Activated B cell treated with CpG ODN at 0.5 μM for 24 hours (primary cell): ENCODE measurements at regions of chrX and their contacts with region 1.

Region 1: DNA sequence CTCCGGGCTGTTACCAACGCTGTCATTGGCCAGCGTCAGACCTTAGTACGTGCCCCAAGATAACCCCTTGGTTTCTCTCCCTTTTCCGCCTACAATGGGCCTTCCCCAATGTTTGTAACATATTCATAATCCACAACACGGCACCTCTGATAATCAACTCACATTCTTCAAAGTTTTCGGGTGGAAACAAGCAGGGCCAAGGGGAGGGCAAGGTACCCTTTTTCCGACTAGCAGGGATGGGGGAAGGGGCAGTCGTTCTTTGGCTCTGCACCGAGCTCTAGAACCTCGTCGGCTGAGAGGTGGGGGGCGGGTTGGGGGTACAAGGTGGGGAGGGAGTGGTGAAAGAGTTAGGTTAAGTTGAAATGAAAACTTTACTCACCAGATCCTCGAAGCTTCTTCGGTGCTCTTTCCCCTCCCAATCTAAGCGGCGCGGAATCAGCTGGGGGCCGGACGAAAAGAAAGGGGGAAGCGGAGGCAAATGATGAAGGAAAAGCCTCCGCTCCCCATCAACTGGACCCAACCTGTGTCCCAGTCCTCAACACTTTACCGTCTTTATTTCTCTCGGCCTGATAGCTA is 1.4 kb downstream of the BRWD3 start:
- DNase-seq: peak; percentile 65
- ATAC-seq: peak; percentile 59
- H3K4me3 Mint-ChIP-seq: peak overlapping the region; percentile 92
- H3K27ac Mint-ChIP-seq: peak overlapping the region; percentile 90
- H3K4me1 Mint-ChIP-seq: peaks cover 32% of the 10 kb centered on the region
- H3K27me3 Mint-ChIP-seq: no peaks in the 10 kb centered on the region
- CTCF ChIP-seq: no peak

Region 2: GRCh38 chrX:81121513-81122382 is 313.5 kb after region 1 on chrX:
- CTCF ChIA-PET with region 1: no interaction called
- POLR2A ChIA-PET with region 1: no interaction called
- intact Hi-C with region 1: loop called (anchors 1 kb)
- DNase-seq: peak; percentile 70
- ATAC-seq: peak; percentile 95
- H3K4me3 Mint-ChIP-seq: peak overlapping the region; percentile 93
- H3K27ac Mint-ChIP-seq: peak overlapping the region; percentile 82
- H3K4me1 Mint-ChIP-seq: peaks cover 10% of the 10 kb centered on the region
- H3K27me3 Mint-ChIP-seq: no peaks in the 10 kb centered on the region
- CTCF ChIP-seq: no peak

Region 3: GRCh38 chrX:81201671-81202455 is 393.6 kb after region 1 on chrX and contains the starts of genes HMGN5 and SH3BGRL:
- CTCF ChIA-PET with region 1: no interaction called
- POLR2A ChIA-PET with region 1: interaction called, 19 read pairs
- intact Hi-C with region 1: loop called (anchors 1 kb)
- DNase-seq: peak; percentile 41
- ATAC-seq: peak; percentile 94
- H3K4me3 Mint-ChIP-seq: peak within 1 kb of the TSS; percentile 95
- H3K27ac Mint-ChIP-seq: peak within 1 kb of the TSS; percentile 92
- H3K4me1 Mint-ChIP-seq: peaks cover 62% of the 10 kb centered on the region
- H3K27me3 Mint-ChIP-seq: no peaks in the 10 kb centered on the region
- CTCF ChIP-seq: no peak
- total RNA-seq, gene HMGN5: 1.0 and 1.2 TPM in 2 replicates
- total RNA-seq, gene SH3BGRL: 116 and 117 TPM in 2 replicates

Region 4: DNA sequence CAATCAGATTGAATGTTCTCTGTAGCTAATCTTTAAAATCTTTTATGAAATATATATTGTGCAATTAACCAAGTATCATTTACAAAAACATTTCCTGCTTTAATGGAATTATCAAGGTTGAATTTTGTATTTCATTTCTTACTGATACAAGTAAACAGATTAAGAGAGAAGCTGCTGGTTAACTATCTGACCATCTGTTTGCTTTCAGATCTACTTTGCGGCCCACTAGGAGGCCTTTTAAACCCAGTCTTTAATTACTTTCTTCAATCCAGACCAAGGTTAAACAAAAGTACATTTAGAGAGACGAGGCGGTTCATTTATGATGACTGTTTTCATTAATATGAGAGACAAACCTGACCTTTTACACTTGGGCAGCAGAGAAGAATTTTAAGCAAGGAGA is 400.2 kb after region 1 on chrX:
- CTCF ChIA-PET with region 1: no interaction called
- POLR2A ChIA-PET with region 1: interaction called, 13 read pairs
- intact Hi-C with region 1: no loop called
- DNase-seq: no peak
- ATAC-seq: no peak
- H3K4me3 Mint-ChIP-seq: no peak overlapping the region
- H3K27ac Mint-ChIP-seq: no peak overlapping the region
- H3K4me1 Mint-ChIP-seq: peaks cover 49% of the 10 kb centered on the region
- H3K27me3 Mint-ChIP-seq: no peaks in the 10 kb centered on the region
- CTCF ChIP-seq: no peak

Region 5: DNA sequence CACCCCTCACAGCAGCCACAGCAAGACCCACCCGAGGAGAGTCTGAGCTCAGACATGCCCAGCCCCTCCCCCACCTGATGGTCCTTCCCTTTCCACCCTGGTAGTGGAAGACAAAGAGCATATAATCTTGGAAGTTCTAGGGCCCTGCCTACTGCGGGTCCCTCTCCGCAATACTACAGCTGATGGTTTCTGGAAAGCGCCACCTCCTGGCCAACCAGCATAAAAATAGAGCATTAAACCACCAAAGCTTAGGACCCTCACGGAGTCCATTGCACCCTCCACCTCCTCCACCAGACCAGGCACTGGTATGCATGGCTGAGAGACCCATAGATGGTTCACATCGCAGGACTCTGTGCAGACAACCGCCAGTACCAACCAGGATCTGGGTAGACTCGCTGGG is 471.9 kb after region 1 on chrX:
- CTCF ChIA-PET with region 1: no interaction called
- POLR2A ChIA-PET with region 1: no interaction called
- intact Hi-C with region 1: no loop called
- DNase-seq: no peak
- ATAC-seq: no peak
- H3K4me3 Mint-ChIP-seq: no peak overlapping the region
- H3K27ac Mint-ChIP-seq: no peak overlapping the region
- H3K4me1 Mint-ChIP-seq: no peaks in the 10 kb centered on the region
- H3K27me3 Mint-ChIP-seq: no peaks in the 10 kb centered on the region
- CTCF ChIP-seq: no peak